ENCODE measurements at regions of chr12 and their contacts with region 1.

Region 1: GRCh38 chr12:58920102-58920960 is at the start of gene LRIG3:
- DNase-seq: peak; percentile 89
- H3K4me3 Mint-ChIP-seq: peak within 1 kb of the TSS; percentile 94
- H3K27ac Mint-ChIP-seq: peak within 1 kb of the TSS; percentile 98
- H3K4me1 Mint-ChIP-seq: peaks cover 30% of the 10 kb centered on the region
- H3K27me3 Mint-ChIP-seq: no peaks in the 10 kb centered on the region
- CTCF ChIP-seq: no peak
- total RNA-seq, gene LRIG3: 26.5 and 41.5 TPM in 2 replicates

Region 2: GRCh38 chr12:58540480-58541299 is 379.6 kb before region 1 on chr12:
- CTCF ChIA-PET with region 1: interaction called, 10 read pairs
- POLR2A ChIA-PET with region 1: interaction called, 12 read pairs
- intact Hi-C with region 1: loop called (anchors 2 kb)
- DNase-seq: peak; percentile 78
- H3K4me3 Mint-ChIP-seq: no peak overlapping the region
- H3K27ac Mint-ChIP-seq: no peak overlapping the region
- H3K4me1 Mint-ChIP-seq: peaks cover 20% of the 10 kb centered on the region
- H3K27me3 Mint-ChIP-seq: no peaks in the 10 kb centered on the region
- CTCF ChIP-seq: peak; percentile 91

Region 3: GRCh38 chr12:58893495-58893894 is 26.8 kb before region 1 on chr12:
- CTCF ChIA-PET with region 1: interaction called, 4 read pairs
- POLR2A ChIA-PET with region 1: interaction called, 76 read pairs
- intact Hi-C with region 1: no loop called
- DNase-seq: peak; percentile 7
- H3K4me3 Mint-ChIP-seq: no peak overlapping the region
- H3K27ac Mint-ChIP-seq: no peak overlapping the region
- H3K4me1 Mint-ChIP-seq: peaks cover 24% of the 10 kb centered on the region
- H3K27me3 Mint-ChIP-seq: no peaks in the 10 kb centered on the region
- CTCF ChIP-seq: no peak

Region 4: DNA sequence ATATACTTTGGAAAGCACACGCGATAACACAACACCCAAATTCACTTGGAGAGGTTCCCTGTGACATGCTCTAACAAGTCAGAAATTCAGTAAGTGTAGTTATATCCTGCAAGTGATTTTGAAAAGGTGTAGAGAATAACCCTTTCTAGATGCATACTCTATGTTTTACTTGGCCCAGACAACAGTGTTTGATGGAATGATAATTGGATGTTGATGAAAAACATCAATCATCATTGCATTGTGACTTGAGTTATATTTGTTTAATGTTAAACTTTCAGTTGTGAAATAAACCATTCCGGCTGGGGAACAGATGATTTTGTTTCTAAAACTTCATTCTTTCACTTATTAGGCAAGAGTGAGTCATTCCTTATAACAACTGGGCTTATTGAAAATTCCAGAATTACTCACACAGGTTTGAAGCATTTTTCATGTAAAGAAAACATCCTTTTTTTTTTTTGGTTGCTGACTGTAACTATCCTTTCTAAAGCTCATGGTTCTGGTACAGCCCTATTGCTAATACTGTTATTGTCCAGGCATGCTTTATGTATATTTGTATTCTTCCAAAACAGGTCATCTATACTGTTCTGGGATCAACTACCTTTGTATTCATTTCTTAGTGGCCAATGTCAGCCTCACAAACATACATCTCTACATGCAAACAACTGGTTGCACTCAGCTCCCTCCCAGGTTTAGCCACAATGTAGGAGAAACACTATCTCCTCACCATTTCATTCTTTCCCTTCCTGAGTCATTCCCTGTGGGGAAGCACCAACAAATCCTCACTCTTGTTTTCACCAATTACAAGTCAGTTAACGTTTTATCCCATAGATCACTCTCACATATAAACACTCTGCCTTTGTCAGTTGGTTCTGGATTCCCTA is 121.2 kb after region 1 on chr12:
- CTCF ChIA-PET with region 1: interaction called, 7 read pairs
- POLR2A ChIA-PET with region 1: interaction called, 655 read pairs
- intact Hi-C with region 1: loop called (anchors 1 kb)
- DNase-seq: peak; percentile 94
- H3K4me3 Mint-ChIP-seq: peak overlapping the region; percentile 62
- H3K27ac Mint-ChIP-seq: peak overlapping the region; percentile 64
- H3K4me1 Mint-ChIP-seq: peaks cover 45% of the 10 kb centered on the region
- H3K27me3 Mint-ChIP-seq: no peaks in the 10 kb centered on the region
- CTCF ChIP-seq: no peak

Region 5: GRCh38 chr12:59077575-59078426 is 157.5 kb after region 1 on chr12:
- CTCF ChIA-PET with region 1: interaction called, 11 read pairs
- POLR2A ChIA-PET with region 1: interaction called, 439 read pairs
- intact Hi-C with region 1: loop called (anchors 2 kb)
- DNase-seq: peak; percentile 49
- H3K4me3 Mint-ChIP-seq: no peak overlapping the region
- H3K27ac Mint-ChIP-seq: peak overlapping the region; percentile 86
- H3K4me1 Mint-ChIP-seq: peaks cover 43% of the 10 kb centered on the region
- H3K27me3 Mint-ChIP-seq: no peaks in the 10 kb centered on the region
- CTCF ChIP-seq: no peak